ENCODE measurements at regions of chr14 and their contacts with region 1.

Region 1: GRCh38 chr14:63454863-63455622 is 88.1 kb downstream of the PPP2R5E start:
- DNase-seq: no peak
- ATAC-seq: peak; percentile 11 to 33 (median 26)
- H3K4me3 ChIP-seq: no peak overlapping the region
- H3K27ac ChIP-seq: no peak overlapping the region
- H3K4me1 ChIP-seq: peaks cover 0 to 22% (median 10%) of the 10 kb centered on the region in 4 donors
- H3K27me3 ChIP-seq: no peaks in the 10 kb centered on the region
- CTCF ChIP-seq: no peak
- POLR2A ChIP-seq: no peak

Region 2: DNA sequence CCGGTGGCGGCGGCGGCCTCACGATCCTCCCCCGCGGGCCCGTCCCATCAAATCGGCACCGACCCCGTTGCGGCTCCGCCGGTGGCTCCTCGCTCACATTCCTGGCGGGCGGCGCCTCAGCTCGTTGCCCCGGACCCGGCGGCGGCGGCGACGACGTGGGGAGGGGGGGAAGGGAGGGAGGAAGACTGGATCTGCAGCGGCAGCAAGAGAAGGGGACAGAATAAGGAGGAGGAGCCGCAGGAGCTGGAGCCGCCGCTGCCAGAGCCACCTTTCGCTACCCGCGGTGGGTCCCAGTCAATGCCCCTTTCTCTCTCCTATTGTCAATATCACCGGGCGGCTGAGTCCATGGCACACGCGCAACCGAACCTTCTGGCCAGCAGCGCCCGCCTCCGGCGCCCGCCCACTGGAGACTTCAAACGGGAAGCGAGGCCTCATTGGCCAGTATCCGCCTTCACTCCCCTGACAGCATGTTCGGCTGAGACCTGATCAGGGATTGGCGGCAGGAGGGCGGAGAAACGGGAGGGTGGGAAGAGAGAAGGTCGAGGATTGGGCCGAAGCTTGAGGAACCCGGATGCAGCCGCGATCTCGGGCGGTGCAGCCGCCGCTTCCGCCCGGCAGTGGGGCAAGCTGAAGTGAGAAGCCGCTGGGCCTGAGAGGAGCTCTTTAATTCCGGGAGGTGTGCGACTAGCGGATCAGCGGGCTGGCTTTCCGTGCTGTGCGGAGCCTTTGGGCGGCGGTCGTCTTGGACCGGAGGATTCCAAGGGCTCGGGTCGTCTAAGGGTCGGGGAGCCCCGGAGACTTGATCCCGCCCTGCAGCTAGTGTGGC is 88.2 kb after region 1 on chr14 and contains the start of gene PPP2R5E:
- intact Hi-C with region 1: loop called in 1 of 2 experiments (anchors 10 kb)
- DNase-seq: peak; percentile 98 to 99 (median 99)
- ATAC-seq: peak; percentile 95 to 99 (median 98)
- H3K4me3 ChIP-seq: peak within 1 kb of the TSS; percentile 92 to 96 (median 95)
- H3K27ac ChIP-seq: peak within 1 kb of the TSS; percentile 79 to 91 (median 87)
- H3K4me1 ChIP-seq: peaks cover 0 to 13% (median 2%) of the 10 kb centered on the region in 4 donors
- H3K27me3 ChIP-seq: no peaks in the 10 kb centered on the region
- CTCF ChIP-seq: no peak
- POLR2A ChIP-seq: peak; percentile 87
- total RNA-seq, gene PPP2R5E: 12.5 to 34.8 (median 18.2) TPM